Posterior cingulate gyrus (tissue), 11 donors: ENCODE measurements at regions of chr1 and their contacts with region 1.

Region 1: GRCh38 chr1:27392096-27392777 is at the start of gene GPR3:
- DNase-seq: peak; percentile 74 to 98 (median 90)

Region 2: GRCh38 chr1:27300341-27301051 is 91.7 kb before region 1 on chr1:
- intact Hi-C with region 1: loop called (anchors 1 kb)
- DNase-seq: peak; percentile 77 to 98 (median 82)

Region 3: DNA sequence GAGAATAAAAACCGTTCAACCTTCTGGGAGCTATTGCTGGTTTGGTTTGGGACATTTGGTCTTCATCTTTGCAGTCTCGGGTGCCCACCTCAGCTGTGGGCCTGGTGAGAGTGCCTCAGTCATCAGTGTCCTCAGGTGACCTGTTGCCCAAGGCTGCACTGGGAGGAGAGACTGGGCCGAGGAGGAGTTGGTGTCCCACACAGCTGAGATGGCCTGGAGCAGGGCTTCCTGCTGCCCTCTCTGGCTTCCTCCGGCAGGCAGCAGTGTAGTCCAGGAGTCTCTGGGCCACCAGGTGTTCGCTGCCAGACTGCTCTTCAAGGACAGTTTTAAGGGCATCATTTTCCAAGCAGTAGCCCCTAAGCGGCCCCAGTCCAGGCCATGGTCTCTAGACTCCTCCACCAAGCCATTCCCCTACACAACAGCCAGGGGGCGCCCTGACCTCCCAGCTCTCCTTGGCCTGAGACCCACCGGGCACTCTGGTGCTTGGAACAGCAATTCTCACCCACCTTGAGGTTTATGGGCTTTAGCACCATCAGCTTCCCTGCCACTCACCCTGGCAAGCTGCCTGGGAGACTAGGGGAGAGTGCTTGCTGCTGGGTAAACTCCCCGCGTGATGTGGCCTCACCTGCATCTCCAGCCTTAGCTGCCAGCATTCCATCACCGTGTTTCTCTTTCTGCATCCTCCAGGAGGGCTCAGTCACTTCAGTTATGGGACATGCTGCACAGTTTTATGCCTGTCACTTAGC is 59.5 kb before region 1 on chr1:
- intact Hi-C with region 1: loop called (anchors 10 kb)
- DNase-seq: peak in 7 of 10 donors; percentile 33 to 93 (median 59)

Region 4: GRCh38 chr1:27363766-27364695 is 28.2 kb before region 1 on chr1:
- intact Hi-C with region 1: loop called (anchors 1 kb)
- DNase-seq: peak in 1 of 10 donors; percentile 57

Region 5: DNA sequence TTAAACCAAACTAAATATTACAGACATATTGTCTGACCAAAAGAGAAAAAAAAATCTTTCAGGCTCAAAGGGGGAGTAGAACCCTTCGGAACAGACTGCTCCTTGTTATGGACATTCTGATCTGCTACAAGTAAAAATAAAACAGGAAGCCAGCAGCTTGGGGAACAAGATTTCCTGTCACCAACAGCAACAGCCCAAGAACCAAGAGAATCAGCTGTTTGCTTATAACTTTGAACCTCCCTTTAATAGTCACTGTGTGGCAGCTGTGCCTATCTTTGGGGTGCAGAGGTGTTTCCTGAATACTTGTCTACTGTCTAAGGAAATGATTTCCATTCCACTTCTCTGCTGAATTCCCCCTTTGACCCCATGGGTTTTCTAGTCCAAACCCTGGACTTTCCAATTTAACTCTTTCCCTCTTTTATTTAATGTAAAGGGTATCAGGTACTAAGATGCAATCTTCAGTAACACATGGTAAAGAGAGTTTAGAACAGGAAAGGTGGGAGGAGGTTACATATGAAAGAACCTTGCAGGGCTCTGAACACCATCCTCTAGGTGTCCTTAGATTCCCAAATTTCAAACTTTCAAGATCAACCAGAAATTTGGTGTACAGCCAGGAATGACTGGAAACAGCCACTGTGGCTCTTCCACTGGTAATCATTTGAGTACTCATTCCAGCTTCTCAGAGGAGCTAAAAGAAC is 38.8 kb after region 1 on chr1:
- intact Hi-C with region 1: no loop called
- DNase-seq: no peak

Region 6: GRCh38 chr1:27662707-27663393 is 270.6 kb after region 1 on chr1:
- intact Hi-C with region 1: loop called (anchors 10 kb)
- DNase-seq: peak; percentile 68 to 97 (median 89)